Dendritic cell treated with granulocyte-macrophage colony-stimulating factor and Interleukin-4, amounts not matched to agents 40 ng/mL and 50 ng/mL, for 4 days (primary cell): ENCODE measurements at regions of chr15 and their contacts with region 1.

Region 1: GRCh38 chr15:44265757-44266156 is 22.8 kb upstream of the GOLM2 start:
- H3K4me3 Mint-ChIP-seq: no peak overlapping the region
- H3K27ac Mint-ChIP-seq: no peak overlapping the region
- H3K4me1 Mint-ChIP-seq: peaks cover 5% of the 10 kb centered on the region
- H3K27me3 Mint-ChIP-seq: peaks cover 2% of the 10 kb centered on the region

Region 2: GRCh38 chr15:44215594-44215993 is 50.2 kb before region 1 on chr15:
- intact Hi-C with region 1: no loop called
- H3K4me3 Mint-ChIP-seq: no peak overlapping the region
- H3K27ac Mint-ChIP-seq: no peak overlapping the region
- H3K4me1 Mint-ChIP-seq: no peaks in the 10 kb centered on the region
- H3K27me3 Mint-ChIP-seq: peaks cover 12% of the 10 kb centered on the region

Region 3: GRCh38 chr15:44501768-44502366 is 236.1 kb after region 1 on chr15:
- intact Hi-C with region 1: loop called (anchors 10 kb)
- H3K4me3 Mint-ChIP-seq: no peak overlapping the region
- H3K27ac Mint-ChIP-seq: no peak overlapping the region
- H3K4me1 Mint-ChIP-seq: no peaks in the 10 kb centered on the region
- H3K27me3 Mint-ChIP-seq: no peaks in the 10 kb centered on the region

Region 4: DNA sequence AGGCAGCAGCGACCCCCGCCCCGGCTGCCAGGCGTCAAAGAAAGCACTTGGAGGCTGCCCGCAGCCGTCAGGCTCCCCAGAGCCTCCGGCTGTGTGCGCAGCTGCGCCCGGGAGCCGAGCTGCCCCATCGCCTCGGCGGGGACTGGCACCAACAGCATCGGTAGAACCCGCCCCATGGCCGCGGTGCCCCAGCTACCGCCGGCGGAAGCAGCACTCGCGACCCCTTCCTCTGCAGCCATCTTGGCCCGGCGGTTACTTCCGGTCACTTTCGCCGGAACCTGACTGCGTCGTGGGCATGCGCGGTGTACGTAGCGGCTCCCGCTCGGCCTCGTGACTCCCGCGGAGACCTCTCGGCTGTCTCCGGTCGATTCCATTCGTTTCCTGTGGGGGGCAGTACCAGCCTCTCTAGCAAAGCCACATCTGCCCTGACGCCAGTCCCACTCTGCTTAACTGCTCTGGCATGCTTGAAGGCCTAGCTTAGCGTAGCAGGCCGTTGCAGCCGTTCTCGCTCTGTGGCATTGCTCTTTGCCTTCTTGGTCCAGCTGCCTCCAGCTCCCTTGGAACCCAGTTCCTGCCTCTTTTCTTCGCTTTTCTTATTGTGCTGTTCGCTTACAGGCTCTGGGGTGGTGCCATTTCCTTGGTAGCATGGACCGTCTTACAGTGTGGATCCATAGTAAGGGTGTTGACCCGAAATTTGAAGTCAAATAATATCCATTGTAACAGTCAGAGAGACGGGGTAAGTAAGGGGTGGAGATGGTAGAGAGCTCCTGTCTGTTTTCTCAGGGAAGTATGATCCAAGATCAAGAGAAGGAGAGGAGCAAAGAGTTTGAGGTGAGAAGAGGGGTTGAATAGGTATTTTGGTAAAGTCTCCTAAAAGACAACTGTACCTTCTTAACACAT is 397.9 kb after region 1 on chr15 and contains the start of gene SPG11:
- intact Hi-C with region 1: no loop called
- H3K4me3 Mint-ChIP-seq: peak within 1 kb of the TSS; percentile 95
- H3K27ac Mint-ChIP-seq: peak within 1 kb of the TSS; percentile 96
- H3K4me1 Mint-ChIP-seq: peaks cover 32% of the 10 kb centered on the region
- H3K27me3 Mint-ChIP-seq: no peaks in the 10 kb centered on the region